Activated CD8-positive, alpha-beta T cell treated with anti-CD3 and anti-CD28 coated beads, Interleukin-2, amount 10 ng/mL, durations not matched to agents 7 days and 5 days (primary cell): ENCODE measurements at regions of chr22 and their contacts with region 1.

Region 1: GRCh38 chr22:44026630-44027511 is 2.8 kb downstream of the PARVB start:
- DNase-seq: peak; percentile 85
- ATAC-seq: peak; percentile 69
- H3K4me3 Mint-ChIP-seq: peak overlapping the region; percentile 67
- H3K27ac Mint-ChIP-seq: peak overlapping the region; percentile 89
- H3K4me1 Mint-ChIP-seq: peaks cover 62% of the 10 kb centered on the region
- H3K27me3 Mint-ChIP-seq: no peaks in the 10 kb centered on the region

Region 2: GRCh38 chr22:44037519-44038370 is 10.9 kb after region 1 on chr22:
- CTCF ChIA-PET with region 1: no interaction called
- POLR2A ChIA-PET with region 1: interaction called, 10 read pairs
- DNase-seq: no peak
- ATAC-seq: no peak
- H3K4me3 Mint-ChIP-seq: no peak overlapping the region
- H3K27ac Mint-ChIP-seq: no peak overlapping the region
- H3K4me1 Mint-ChIP-seq: peaks cover 30% of the 10 kb centered on the region
- H3K27me3 Mint-ChIP-seq: no peaks in the 10 kb centered on the region

Region 3: GRCh38 chr22:44159221-44159620 is 132.3 kb after region 1 on chr22:
- CTCF ChIA-PET with region 1: no interaction called
- POLR2A ChIA-PET with region 1: no interaction called
- DNase-seq: no peak
- ATAC-seq: no peak
- H3K4me3 Mint-ChIP-seq: no peak overlapping the region
- H3K27ac Mint-ChIP-seq: no peak overlapping the region
- H3K4me1 Mint-ChIP-seq: no peaks in the 10 kb centered on the region
- H3K27me3 Mint-ChIP-seq: peaks cover 2% of the 10 kb centered on the region